ENCODE measurements at regions of chr16 and their contacts with region 1.

Region 1: DNA sequence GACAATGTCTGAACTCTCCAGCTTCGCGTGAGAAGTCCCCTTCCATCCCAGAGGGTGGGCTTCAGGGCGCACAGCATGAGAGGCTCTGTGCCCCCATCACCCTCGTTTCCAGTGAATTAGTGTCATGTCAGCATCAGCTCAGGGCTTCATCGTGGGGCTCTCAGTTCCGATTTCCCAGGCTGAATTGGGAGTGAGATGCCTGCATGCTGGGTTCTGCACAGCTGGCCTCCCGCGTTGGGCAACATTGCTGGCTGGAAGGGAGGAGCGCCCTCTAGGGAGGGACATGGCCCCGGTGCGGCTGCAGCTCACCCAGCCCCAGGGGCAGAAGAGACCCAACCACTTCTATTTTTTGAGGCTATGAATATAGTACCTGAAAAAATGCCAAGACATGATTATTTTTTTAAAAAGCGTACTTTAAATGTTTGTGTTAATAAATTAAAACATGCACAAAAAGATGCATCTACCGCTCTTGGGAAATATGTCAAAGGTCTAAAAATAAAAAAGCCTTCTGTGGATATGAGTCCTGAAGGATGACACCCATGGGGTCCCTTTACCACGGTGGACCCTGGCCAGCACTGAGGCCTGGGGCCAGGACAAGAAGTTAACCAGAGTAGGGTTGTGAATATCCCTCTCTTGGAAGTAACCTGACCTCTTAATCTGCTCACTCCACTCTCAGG is 10.5 kb upstream of the ITGAD start:
- DNase-seq: peak; percentile 83
- ATAC-seq: peak; percentile 94
- H3K4me3 Mint-ChIP-seq: peak overlapping the region; percentile 31
- H3K27ac Mint-ChIP-seq: peak overlapping the region; percentile 44
- H3K4me1 Mint-ChIP-seq: peaks cover 8% of the 10 kb centered on the region
- H3K27me3 Mint-ChIP-seq: peaks cover 4% of the 10 kb centered on the region; the same call in 1 of the 2 replicates
- CTCF ChIP-seq: peak; percentile 62

Region 2: GRCh38 chr16:31202414-31203375 is 179.9 kb before region 1 on chr16 and contains the start of gene PYCARD:
- CTCF ChIA-PET with region 1: interaction called, 31 read pairs
- POLR2A ChIA-PET with region 1: interaction called, 3 read pairs
- DNase-seq: peak; percentile 57
- ATAC-seq: peak; percentile 11
- H3K4me3 Mint-ChIP-seq: peak within 1 kb of the TSS; percentile 83
- H3K27ac Mint-ChIP-seq: no peak within 1 kb of the TSS; the same call in 1 of the 2 replicates
- H3K4me1 Mint-ChIP-seq: peaks cover 23% of the 10 kb centered on the region
- H3K27me3 Mint-ChIP-seq: peaks cover 26% of the 10 kb centered on the region
- CTCF ChIP-seq: no peak
- total RNA-seq, gene PYCARD: 35.2 to 45.5 TPM (median 42.4 TPM) in 3 replicates

Region 3: GRCh38 chr16:31215287-31216162 is 167.1 kb before region 1 on chr16:
- CTCF ChIA-PET with region 1: interaction called, 41 read pairs
- POLR2A ChIA-PET with region 1: no interaction called
- DNase-seq: peak; percentile 89
- ATAC-seq: peak; percentile 85
- H3K4me3 Mint-ChIP-seq: peak overlapping the region; percentile 77
- H3K27ac Mint-ChIP-seq: no peak overlapping the region
- H3K4me1 Mint-ChIP-seq: peaks cover 30% of the 10 kb centered on the region
- H3K27me3 Mint-ChIP-seq: peaks cover 57% of the 10 kb centered on the region
- CTCF ChIP-seq: no peak

Region 4: GRCh38 chr16:31357346-31358109 is 25.1 kb before region 1 on chr16:
- CTCF ChIA-PET with region 1: interaction called, 21 read pairs
- POLR2A ChIA-PET with region 1: no interaction called
- DNase-seq: no peak
- ATAC-seq: no peak
- H3K4me3 Mint-ChIP-seq: no peak overlapping the region
- H3K27ac Mint-ChIP-seq: no peak overlapping the region
- H3K4me1 Mint-ChIP-seq: peaks cover 7% of the 10 kb centered on the region
- H3K27me3 Mint-ChIP-seq: peaks cover under 1% of the 10 kb centered on the region; the same call in 1 of the 2 replicates
- CTCF ChIP-seq: no peak

Region 5: GRCh38 chr16:31393056-31393455 is 10.4 kb after region 1 on chr16 and contains the start of gene ITGAD:
- CTCF ChIA-PET with region 1: interaction called, 10 read pairs
- POLR2A ChIA-PET with region 1: no interaction called
- DNase-seq: no peak
- ATAC-seq: no peak
- H3K4me3 Mint-ChIP-seq: no peak within 1 kb of the TSS
- H3K27ac Mint-ChIP-seq: no peak within 1 kb of the TSS
- H3K4me1 Mint-ChIP-seq: peaks cover 6% of the 10 kb centered on the region; the same call in 1 of the 2 replicates
- H3K27me3 Mint-ChIP-seq: no peaks in the 10 kb centered on the region; the same call in 1 of the 2 replicates
- CTCF ChIP-seq: no peak
- total RNA-seq, gene ITGAD: not detected in 3 replicates